Left cardiac atrium (tissue), 4 donors: ENCODE measurements at regions of chr3 and their contacts with region 1.

Region 1: GRCh38 chr3:50611464-50612233 is at the start of gene CISH:
- DNase-seq: peak; percentile 97
- ATAC-seq: peak; percentile 80 to 86
- total RNA-seq, gene CISH: 10.0 to 41.9 TPM

Region 2: DNA sequence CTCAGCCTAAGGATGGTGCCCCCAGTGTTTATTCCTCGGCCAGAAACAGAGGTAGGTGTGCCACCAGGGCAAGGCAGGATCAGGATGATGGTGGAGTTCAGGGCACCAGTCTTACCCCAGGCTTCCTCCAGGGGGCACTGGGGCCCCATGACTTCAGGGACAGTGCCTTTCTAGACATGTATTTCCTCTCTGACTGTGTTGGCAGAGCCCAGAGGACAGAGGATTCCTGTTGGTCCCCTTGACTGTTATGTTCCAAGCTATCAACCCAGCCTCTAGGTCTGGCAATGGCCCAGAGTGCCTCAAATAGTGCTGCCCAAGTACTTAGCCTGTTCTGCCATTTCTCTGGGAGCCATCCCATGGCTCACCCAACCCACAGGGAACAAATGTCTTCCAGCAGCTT is 39.5 kb before region 1 on chr3:
- intact Hi-C with region 1: loop called (anchors 1 to 2 kb)
- DNase-seq: peak; percentile 79
- ATAC-seq: peak; percentile 9 to 13

Region 3: GRCh38 chr3:50885070-50885850 is 273.6 kb after region 1 on chr3:
- intact Hi-C with region 1: loop called in 1 of 2 experiments (anchors 5 kb)
- DNase-seq: no peak
- ATAC-seq: no peak

Region 4: GRCh38 chr3:51282931-51283330 is 671.3 kb after region 1 on chr3:
- intact Hi-C with region 1: no loop called
- DNase-seq: no peak
- ATAC-seq: no peak

Region 5: DNA sequence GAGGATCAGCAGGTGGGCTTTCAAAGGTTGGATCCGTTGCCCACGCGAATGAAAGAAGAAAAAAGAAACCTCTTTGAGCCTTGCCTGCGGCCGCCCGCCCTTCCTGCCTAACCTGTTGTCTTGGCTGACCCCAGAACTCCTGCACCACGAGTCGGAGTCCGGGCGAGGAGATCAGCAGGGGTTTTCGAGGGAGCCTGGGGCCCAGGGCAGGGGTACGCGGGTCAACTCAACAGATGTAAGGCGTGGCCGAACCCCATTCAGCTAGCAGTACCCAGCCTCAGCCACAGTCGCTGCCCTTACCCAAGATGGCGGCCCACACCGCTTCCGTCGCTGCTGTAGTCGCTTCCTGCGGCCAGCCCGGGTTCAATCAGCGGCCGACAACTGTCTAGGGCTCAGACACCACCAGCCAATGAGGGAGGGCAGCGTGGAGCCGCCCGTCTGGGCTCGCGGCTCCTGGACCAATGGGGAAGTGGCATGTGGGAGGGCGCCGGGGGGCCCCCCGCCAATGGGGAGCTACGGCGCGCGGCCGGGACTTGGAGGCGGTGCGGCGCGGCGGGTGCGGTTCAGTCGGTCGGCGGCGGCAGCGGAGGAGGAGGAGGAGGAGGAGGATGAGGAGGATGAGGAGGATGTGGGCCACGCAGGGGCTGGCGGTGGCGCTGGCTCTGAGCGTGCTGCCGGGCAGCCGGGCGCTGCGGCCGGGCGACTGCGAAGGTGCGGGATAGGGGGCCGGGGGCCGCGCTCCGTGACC is 773.3 kb after region 1 on chr3 and contains the start of gene MANF:
- intact Hi-C with region 1: loop called (anchors 5 to 10 kb)
- DNase-seq: peak; percentile 99
- ATAC-seq: peak; percentile 98 to 99
- total RNA-seq, gene MANF: 59.2 to 97.0 TPM